Ovary (tissue), 10 donors: ENCODE measurements at regions of chr18 and their contacts with region 1.

Region 1: DNA sequence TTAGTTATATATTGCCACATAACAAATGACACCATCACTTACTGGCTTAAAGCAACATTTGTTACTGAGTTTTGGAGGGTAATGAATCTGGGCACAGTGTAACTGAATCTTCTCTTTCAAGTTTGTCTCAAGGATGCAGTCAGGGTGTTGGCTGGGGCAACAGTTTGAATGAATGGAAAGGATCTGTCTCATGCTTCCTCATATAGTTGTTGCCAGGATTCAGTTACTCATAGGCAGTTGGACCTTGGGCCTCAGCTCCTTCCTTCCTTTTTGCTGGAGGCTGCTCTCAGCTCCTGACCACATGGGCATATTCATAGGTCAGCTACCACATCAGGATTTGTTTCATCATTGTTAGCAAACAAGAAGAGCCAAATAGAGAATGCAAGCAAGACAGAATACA is 466.1 kb upstream of the MC4R start:
- DNase-seq: no peak
- H3K4me3 ChIP-seq: no peak overlapping the region
- H3K27ac ChIP-seq: no peak overlapping the region
- H3K4me1 ChIP-seq: no peaks in the 10 kb centered on the region
- H3K27me3 ChIP-seq: no peaks in the 10 kb centered on the region
- CTCF ChIP-seq: no peak
- EP300 ChIP-seq: no peak
- POLR2A ChIP-seq: no peak

Region 2: DNA sequence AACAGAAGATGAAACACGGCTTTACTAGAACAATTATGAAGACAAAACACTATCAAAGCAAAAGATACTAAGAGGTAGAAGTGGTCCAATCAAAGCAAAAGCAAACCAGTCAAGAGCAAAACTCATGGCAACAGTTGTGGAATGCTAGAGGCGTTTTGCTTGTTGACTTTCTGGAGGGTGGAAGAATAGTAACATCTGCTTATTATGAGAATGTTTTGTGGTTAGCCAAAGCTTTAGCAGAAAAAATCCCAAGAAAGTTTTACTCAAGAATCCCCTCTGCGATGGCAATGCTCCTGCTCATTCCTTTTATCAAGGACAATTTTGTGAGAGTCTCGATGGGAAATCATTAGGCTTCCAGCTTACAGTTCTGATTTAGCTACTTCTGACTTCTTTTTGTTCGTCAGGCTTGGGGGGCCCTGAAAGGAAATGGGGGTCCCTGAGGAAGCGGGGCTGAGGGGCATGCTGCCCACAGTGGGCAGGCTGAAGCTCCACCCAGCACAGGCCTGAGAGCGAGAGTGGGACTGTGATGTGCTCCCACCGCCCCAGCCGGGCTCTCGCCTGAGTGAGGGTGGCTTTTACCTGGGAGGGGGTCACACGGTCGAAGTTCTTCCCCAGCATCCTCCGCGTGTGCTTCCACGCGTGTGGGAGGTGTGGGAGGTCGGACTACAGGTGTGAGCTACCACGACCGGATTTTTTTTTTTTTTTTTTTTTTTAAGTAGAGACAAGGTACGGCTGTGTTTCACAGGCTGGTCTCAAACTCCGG is 417.1 kb before region 1 on chr18:
- intact Hi-C with region 1: no loop called
- DNase-seq: no peak
- H3K4me3 ChIP-seq: no peak overlapping the region
- H3K27ac ChIP-seq: no peak overlapping the region
- H3K4me1 ChIP-seq: no peaks in the 10 kb centered on the region
- H3K27me3 ChIP-seq: no peaks in the 10 kb centered on the region
- CTCF ChIP-seq: no peak
- EP300 ChIP-seq: no peak
- POLR2A ChIP-seq: no peak

Region 3: DNA sequence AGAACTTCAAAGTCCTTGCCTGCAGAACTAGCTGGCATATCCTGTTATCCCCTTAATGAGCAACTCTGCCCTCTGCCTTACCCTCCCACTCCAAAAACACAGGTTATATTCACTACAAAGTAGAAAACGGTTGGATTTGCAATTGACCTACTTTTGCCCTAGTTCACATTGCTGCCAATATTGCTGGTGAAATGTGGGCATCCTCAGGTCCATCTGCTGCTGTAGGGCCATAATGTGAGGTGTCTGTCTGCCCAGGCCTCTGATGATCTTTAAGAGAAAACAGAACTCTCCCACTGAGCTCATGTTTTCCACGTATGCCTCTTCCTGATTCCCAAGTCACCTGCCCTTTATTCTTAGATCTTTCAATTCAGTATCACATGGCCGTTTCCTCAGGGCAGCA is 200.6 kb after region 1 on chr18:
- intact Hi-C with region 1: loop called in 1 of 4 experiments (anchors 5 kb)
- DNase-seq: no peak
- H3K4me3 ChIP-seq: no peak overlapping the region
- H3K27ac ChIP-seq: no peak overlapping the region
- H3K4me1 ChIP-seq: no peaks in the 10 kb centered on the region
- H3K27me3 ChIP-seq: no peaks in the 10 kb centered on the region
- CTCF ChIP-seq: no peak
- EP300 ChIP-seq: no peak
- POLR2A ChIP-seq: no peak